SK-N-SH (cell line): ENCODE measurements at regions of chr18 and their contacts with region 1.

Region 1: GRCh38 chr18:37529863-37530262 is 35.7 kb downstream of the CELF4 start:
- DNase-seq: no peak
- H3K4me3 ChIP-seq: no peak overlapping the region
- H3K27ac ChIP-seq: no peak overlapping the region
- H3K4me1 ChIP-seq: peaks cover 0 to 27% of the 10 kb centered on the region in 2 experiments; a peak in 1 of 4 replicates
- H3K27me3 ChIP-seq: no peaks in the 10 kb centered on the region
- CTCF ChIP-seq: no peak
- EP300 ChIP-seq: no peak
- RAD21 ChIP-seq: no peak

Region 2: DNA sequence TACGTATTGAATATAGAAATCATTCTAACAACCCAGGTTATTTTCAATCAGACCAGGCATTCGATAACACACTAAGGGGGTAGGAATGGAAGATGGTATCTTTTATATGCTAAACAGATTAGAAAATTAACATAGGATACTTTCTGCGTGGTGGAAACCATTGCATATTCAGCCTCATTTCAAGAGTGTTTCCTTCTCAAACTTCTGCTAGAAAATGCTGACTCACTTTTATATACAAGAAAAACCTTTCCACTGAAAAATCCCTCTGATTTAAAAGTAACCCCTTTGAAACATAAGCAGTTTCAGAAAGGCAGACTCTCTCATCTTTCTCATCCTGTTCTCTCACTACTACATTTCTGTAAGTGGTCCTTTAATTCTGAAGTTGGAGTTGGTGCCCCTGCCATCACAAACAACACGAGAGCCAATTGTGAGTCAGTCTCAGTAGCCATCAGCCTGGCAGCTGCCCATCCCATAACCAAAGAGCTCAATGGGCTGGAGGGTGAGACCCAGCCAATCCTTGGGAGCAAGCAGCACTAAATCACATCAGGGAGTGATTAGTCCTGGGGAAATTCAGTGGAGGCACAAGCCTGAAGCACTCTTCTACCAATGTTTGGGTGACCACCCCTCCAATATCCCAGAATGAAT is 307.4 kb before region 1 on chr18:
- CTCF ChIA-PET with region 1: no interaction called
- POLR2A ChIA-PET with region 1: no interaction called
- DNase-seq: no peak
- H3K4me3 ChIP-seq: no peak overlapping the region
- H3K27ac ChIP-seq: no peak overlapping the region
- H3K4me1 ChIP-seq: no peaks in the 10 kb centered on the region
- H3K27me3 ChIP-seq: no peaks in the 10 kb centered on the region
- CTCF ChIP-seq: no peak
- EP300 ChIP-seq: no peak
- RAD21 ChIP-seq: no peak

Region 3: GRCh38 chr18:37430357-37431076 is 99.3 kb before region 1 on chr18:
- CTCF ChIA-PET with region 1: interaction called, 298 read pairs
- POLR2A ChIA-PET with region 1: no interaction called
- DNase-seq: peak; percentile 59
- H3K4me3 ChIP-seq: no peak overlapping the region
- H3K27ac ChIP-seq: peak overlapping the region in 1 of 2 experiments; percentile 65; a peak in 2 of 4 replicates
- H3K4me1 ChIP-seq: peaks cover 0 to 21% of the 10 kb centered on the region in 2 experiments; a peak in 1 of 4 replicates
- H3K27me3 ChIP-seq: no peaks in the 10 kb centered on the region
- CTCF ChIP-seq: no peak
- EP300 ChIP-seq: no peak
- RAD21 ChIP-seq: peak; percentile 48

Region 4: GRCh38 chr18:37516361-37516853 is 13.5 kb before region 1 on chr18:
- CTCF ChIA-PET with region 1: interaction called, 10 read pairs
- POLR2A ChIA-PET with region 1: interaction called, 3 read pairs
- DNase-seq: peak; percentile 77
- H3K4me3 ChIP-seq: no peak overlapping the region
- H3K27ac ChIP-seq: peak overlapping the region in 1 of 2 experiments; percentile 93; a peak in 2 of 4 replicates
- H3K4me1 ChIP-seq: peaks cover 0 to 65% of the 10 kb centered on the region in 2 experiments; a peak in 2 of 4 replicates
- H3K27me3 ChIP-seq: no peaks in the 10 kb centered on the region
- CTCF ChIP-seq: no peak
- EP300 ChIP-seq: peak in 1 of 2 experiments; percentile 88; a peak in 2 of 4 replicates
- RAD21 ChIP-seq: no peak

Region 5: GRCh38 chr18:38087538-38087937 is 557.7 kb after region 1 on chr18:
- CTCF ChIA-PET with region 1: no interaction called
- POLR2A ChIA-PET with region 1: no interaction called
- DNase-seq: no peak
- H3K4me3 ChIP-seq: no peak overlapping the region
- H3K27ac ChIP-seq: no peak overlapping the region
- H3K4me1 ChIP-seq: no peaks in the 10 kb centered on the region
- H3K27me3 ChIP-seq: no peaks in the 10 kb centered on the region
- CTCF ChIP-seq: no peak
- EP300 ChIP-seq: no peak
- RAD21 ChIP-seq: no peak